Mammary epithelial cell (primary cell): ENCODE measurements at regions of chr2 and their contacts with region 1.

Region 1: GRCh38 chr2:192162392-192163042 is 32.2 kb downstream of the TMEFF2 start:
- DNase-seq: peak; percentile 42
- H3K4me3 ChIP-seq: no peak overlapping the region
- H3K27ac ChIP-seq: no peak overlapping the region
- H3K4me1 ChIP-seq: no peaks in the 10 kb centered on the region
- H3K27me3 ChIP-seq: peaks cover 4% of the 10 kb centered on the region
- CTCF ChIP-seq: peak; percentile 85 to 88

Region 2: DNA sequence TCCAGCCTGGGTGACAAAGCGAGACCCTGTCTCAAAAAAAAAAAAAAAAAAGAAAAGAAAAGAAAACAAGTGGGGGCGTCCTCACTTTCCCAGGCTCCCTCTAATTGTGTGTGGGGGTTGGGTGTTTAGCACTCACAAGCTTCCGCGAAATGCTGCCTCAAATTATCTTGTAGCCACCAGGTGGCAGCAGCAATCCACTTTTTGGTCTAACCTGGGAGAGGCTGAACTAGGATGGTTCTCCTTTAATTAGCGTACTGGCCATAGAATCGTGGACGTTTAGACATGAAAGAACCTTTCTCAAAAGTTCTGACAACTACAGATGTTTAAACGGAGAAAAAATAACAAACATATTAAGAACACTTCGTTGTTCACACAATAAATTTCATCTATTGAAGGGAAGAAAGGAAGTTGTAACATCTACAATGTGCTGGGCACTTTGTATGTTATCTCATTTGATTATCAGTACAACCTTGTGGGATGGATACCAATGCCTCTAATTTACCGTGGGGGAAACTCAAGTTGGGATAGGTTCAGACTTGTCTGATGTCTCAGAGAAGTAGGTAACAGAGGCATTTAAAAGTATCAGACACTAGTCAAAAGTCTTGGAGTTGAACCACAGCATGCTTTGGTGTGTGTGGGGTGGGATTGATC is 607.3 kb before region 1 on chr2:
- CTCF ChIA-PET with region 1: no interaction called
- dilution Hi-C with region 1: loop called (anchors 5 kb)
- in situ Hi-C with region 1: loop called (anchors 10 kb)
- intact Hi-C with region 1: loop called (anchors 1 kb)
- DNase-seq: peak; percentile 80
- H3K4me3 ChIP-seq: peak overlapping the region in 2 of 3 experiments; percentile 35
- H3K27ac ChIP-seq: no peak overlapping the region
- H3K4me1 ChIP-seq: peaks cover 9% of the 10 kb centered on the region
- H3K27me3 ChIP-seq: no peaks in the 10 kb centered on the region
- CTCF ChIP-seq: peak; percentile 64 to 78

Region 3: DNA sequence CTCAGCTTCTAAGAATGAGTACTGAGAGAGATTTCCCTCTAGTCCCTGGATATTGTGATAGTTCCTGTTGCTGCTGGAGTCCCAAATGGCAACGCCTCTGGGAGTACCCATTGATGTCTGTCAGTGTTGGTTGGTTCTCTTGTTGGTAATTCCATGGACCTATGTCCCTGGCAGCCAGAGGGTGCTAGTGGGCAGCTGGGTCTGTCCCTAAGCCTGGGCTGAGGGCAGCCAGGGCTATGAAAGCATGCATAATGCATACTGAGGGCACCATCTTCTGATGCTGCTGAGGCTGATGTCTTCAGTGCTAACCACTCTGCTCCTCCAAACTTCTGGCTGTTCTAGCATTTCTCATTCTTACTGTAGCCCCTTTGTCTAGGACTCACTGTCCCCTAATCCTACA is 448.7 kb before region 1 on chr2:
- CTCF ChIA-PET with region 1: no interaction called
- dilution Hi-C with region 1: no loop called
- in situ Hi-C with region 1: no loop called
- intact Hi-C with region 1: loop called (anchors 10 kb)
- DNase-seq: peak; percentile 21
- H3K4me3 ChIP-seq: no peak overlapping the region
- H3K27ac ChIP-seq: no peak overlapping the region
- H3K4me1 ChIP-seq: no peaks in the 10 kb centered on the region
- H3K27me3 ChIP-seq: no peaks in the 10 kb centered on the region
- CTCF ChIP-seq: peak; percentile 36 to 63

Region 4: DNA sequence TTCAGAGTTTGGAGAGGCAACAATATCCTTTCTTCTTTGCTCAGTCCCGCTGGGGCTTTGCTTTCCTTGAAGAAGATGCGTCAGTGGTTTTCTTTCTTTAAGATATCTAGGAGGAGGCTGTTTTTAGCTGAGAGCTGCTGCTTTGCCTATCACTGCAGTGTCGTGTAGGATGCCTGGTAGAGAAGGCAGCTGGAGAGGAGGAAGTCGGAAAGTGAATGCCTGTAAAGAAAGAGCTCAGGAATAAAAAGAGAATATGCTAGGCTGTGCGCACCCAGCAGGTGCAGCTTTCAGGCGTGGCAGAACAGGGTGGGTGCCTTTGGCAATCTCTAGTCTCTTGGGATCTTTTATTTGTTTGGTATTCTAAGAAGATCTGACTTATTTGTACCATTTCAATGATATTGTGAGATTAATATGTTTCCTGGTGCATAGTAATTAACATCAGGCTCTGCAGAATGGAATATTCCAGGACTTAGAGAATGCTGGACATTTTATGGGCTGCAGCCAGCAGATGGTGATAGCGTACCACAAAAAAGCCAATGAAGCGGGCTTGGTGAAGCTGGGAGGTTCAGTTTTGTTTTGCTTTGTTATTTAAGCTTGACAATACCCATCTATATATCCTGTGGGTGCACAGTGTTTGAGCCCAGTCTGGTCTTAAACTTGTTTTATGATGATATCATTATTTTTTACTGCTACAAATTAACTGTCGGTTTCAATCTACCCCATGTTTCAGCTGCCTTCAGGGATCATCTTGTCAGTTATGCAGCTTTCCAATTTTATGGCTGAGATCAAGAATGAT is 350.5 kb before region 1 on chr2:
- CTCF ChIA-PET with region 1: interaction called, 30 read pairs
- dilution Hi-C with region 1: no loop called
- in situ Hi-C with region 1: loop called (anchors 5 kb)
- intact Hi-C with region 1: loop called (anchors 1 kb)
- DNase-seq: peak; percentile 38
- H3K4me3 ChIP-seq: no peak overlapping the region
- H3K27ac ChIP-seq: no peak overlapping the region
- H3K4me1 ChIP-seq: no peaks in the 10 kb centered on the region
- H3K27me3 ChIP-seq: no peaks in the 10 kb centered on the region
- CTCF ChIP-seq: peak; percentile 88 to 91

Region 5: GRCh38 chr2:191869178-191869577 is 293.3 kb before region 1 on chr2:
- CTCF ChIA-PET with region 1: interaction called, 9 read pairs
- dilution Hi-C with region 1: no loop called
- in situ Hi-C with region 1: no loop called
- intact Hi-C with region 1: loop called (anchors 1 kb)
- DNase-seq: no peak
- H3K4me3 ChIP-seq: no peak overlapping the region
- H3K27ac ChIP-seq: no peak overlapping the region
- H3K4me1 ChIP-seq: peaks cover 37% of the 10 kb centered on the region
- H3K27me3 ChIP-seq: no peaks in the 10 kb centered on the region
- CTCF ChIP-seq: peak; percentile 15 to 44

Region 6: GRCh38 chr2:192407692-192408091 is 245.2 kb after region 1 on chr2:
- CTCF ChIA-PET with region 1: no interaction called
- dilution Hi-C with region 1: no loop called
- in situ Hi-C with region 1: no loop called
- intact Hi-C with region 1: no loop called
- DNase-seq: no peak
- H3K4me3 ChIP-seq: no peak overlapping the region
- H3K27ac ChIP-seq: no peak overlapping the region
- H3K4me1 ChIP-seq: no peaks in the 10 kb centered on the region
- H3K27me3 ChIP-seq: peaks cover 3% of the 10 kb centered on the region
- CTCF ChIP-seq: no peak